Activated CD8-positive, alpha-beta T cell treated with anti-CD3 and anti-CD28 coated beads for 36 hours (primary cell): ENCODE measurements at regions of chr3 and their contacts with region 1.

Region 1: DNA sequence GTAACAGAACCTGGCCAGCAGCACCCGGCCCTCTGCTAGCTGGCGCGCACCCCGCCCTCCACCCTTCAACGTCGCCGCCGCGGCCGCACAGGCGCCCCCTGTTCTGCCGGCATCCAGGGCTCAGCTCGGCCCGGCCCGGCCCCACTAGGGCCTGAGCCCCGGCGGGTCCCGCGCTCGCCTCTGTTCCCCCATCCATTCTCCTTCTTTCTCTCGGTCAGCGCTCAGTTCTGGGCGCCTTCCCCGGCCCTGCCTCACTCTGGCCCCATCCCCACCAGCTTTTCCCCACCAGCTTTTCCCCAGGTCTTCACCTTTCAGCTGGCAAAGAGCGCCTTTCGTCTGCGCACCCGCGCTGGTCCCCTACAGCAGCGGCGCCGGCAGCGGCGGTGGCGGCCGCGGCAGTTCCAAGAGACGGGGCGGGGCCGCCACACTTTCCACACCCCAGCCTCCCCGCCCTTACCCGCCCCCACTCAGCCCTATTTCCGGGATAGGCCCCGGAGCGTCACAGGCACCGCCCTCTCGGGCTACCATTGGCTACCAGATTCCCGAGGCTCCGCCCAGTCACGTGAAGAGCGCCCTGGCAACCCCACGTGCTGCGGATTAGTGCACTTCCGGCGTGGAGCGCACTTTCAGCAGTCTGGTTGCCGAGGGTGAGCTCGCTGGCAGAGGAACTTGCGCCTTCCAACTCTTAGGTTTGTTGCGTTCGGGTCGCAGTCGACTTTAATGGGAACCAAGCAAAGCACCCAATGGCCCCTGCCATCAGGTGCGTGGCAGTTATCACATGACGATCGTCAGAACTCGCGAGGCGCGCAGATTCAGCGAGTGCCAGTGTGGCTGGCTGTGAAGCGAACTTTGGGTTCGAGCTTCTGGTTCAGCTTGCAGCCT is at the start of gene EIF5A2:
- DNase-seq: peak; percentile 98
- ATAC-seq: peak; percentile 98
- H3K4me3 Mint-ChIP-seq: peak within 1 kb of the TSS; percentile 95
- H3K27ac Mint-ChIP-seq: peak within 1 kb of the TSS; percentile 93
- H3K4me1 Mint-ChIP-seq: peaks cover 25% of the 10 kb centered on the region
- H3K27me3 Mint-ChIP-seq: no peaks in the 10 kb centered on the region
- CTCF ChIP-seq: no peak
- total RNA-seq, gene EIF5A2: 5.2 to 9.5 TPM

Region 2: GRCh38 chr3:170864525-170865208 is 43.8 kb before region 1 on chr3:
- CTCF ChIA-PET with region 1: interaction called, 5 read pairs
- POLR2A ChIA-PET with region 1: interaction called, 26 read pairs
- intact Hi-C with region 1: loop called (anchors 5 kb)
- DNase-seq: no peak
- ATAC-seq: no peak
- H3K4me3 Mint-ChIP-seq: no peak overlapping the region
- H3K27ac Mint-ChIP-seq: no peak overlapping the region
- H3K4me1 Mint-ChIP-seq: peaks cover 9% of the 10 kb centered on the region
- H3K27me3 Mint-ChIP-seq: no peaks in the 10 kb centered on the region
- CTCF ChIP-seq: no peak

Region 3: DNA sequence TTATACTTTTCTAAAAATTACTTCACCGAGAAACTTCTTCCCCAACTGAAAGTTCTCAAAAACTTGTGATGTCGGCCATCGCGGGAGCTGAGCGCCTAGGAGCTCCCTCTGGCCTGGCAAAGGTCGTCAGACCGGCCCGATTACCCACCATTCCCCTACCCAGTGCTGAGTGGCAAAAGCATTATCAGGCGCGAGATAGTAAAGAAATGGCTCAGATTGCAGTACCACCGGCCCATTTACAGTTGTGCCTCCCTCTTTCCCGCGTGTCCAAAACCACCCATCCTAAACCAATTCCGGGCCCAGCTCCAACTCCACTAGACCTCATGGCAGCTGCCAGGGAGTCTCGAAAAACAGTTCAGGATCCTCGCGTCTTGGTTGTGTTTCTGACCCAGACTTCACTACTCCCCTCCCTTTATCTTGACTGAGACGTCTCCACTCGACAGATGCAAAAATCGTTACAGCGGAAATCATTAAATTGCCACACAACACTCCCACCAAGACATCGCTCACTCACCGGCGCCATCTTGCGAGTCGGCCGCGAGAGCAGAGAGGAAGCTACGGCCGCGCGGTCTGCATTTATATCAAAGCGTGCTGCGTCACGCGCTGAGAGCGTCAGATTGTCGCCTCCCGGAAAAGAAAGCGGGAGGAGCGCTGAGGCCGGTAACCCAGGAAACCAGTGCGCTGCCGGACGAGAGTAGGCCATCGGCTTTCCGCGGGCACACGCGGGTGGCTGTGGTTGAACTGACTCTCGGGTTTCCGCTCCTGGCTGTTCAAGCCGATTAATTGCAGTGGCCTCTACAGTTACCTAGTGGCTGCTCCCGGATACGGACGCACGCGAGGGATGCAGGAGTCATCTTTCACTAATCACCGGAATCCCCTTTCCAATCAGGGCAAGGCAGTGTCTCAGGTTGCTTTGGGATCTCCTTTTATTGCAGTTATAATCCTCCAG is 38.6 kb before region 1 on chr3 and contains the start of gene RPL22L1:
- CTCF ChIA-PET with region 1: interaction called, 5 read pairs
- POLR2A ChIA-PET with region 1: interaction called, 26 read pairs
- intact Hi-C with region 1: loop called (anchors 5 kb)
- DNase-seq: peak; percentile 96
- ATAC-seq: peak; percentile 94
- H3K4me3 Mint-ChIP-seq: peak within 1 kb of the TSS; percentile 87
- H3K27ac Mint-ChIP-seq: peak within 1 kb of the TSS; percentile 95
- H3K4me1 Mint-ChIP-seq: peaks cover 19% of the 10 kb centered on the region
- H3K27me3 Mint-ChIP-seq: no peaks in the 10 kb centered on the region
- CTCF ChIP-seq: no peak
- total RNA-seq, gene RPL22L1: 421 to 453 TPM